PC-3 (cell line): ENCODE measurements at regions of chr3 and their contacts with region 1.

Region 1: GRCh38 chr3:10941972-10942371 is 50.6 kb upstream of the SLC6A1 start:
- DNase-seq: peak; percentile 68
- ATAC-seq: peak; percentile 30; the same call in 1 of the 2 replicates
- H3K4me3 ChIP-seq: no peak overlapping the region
- H3K27ac ChIP-seq: no peak overlapping the region
- H3K4me1 ChIP-seq: no peaks in the 10 kb centered on the region
- H3K27me3 ChIP-seq: 0 out of 2 replicates have a peak, but pooled peaks cover 3% of the 10 kb centered on the region
- CTCF ChIP-seq: peak; percentile 97

Region 2: DNA sequence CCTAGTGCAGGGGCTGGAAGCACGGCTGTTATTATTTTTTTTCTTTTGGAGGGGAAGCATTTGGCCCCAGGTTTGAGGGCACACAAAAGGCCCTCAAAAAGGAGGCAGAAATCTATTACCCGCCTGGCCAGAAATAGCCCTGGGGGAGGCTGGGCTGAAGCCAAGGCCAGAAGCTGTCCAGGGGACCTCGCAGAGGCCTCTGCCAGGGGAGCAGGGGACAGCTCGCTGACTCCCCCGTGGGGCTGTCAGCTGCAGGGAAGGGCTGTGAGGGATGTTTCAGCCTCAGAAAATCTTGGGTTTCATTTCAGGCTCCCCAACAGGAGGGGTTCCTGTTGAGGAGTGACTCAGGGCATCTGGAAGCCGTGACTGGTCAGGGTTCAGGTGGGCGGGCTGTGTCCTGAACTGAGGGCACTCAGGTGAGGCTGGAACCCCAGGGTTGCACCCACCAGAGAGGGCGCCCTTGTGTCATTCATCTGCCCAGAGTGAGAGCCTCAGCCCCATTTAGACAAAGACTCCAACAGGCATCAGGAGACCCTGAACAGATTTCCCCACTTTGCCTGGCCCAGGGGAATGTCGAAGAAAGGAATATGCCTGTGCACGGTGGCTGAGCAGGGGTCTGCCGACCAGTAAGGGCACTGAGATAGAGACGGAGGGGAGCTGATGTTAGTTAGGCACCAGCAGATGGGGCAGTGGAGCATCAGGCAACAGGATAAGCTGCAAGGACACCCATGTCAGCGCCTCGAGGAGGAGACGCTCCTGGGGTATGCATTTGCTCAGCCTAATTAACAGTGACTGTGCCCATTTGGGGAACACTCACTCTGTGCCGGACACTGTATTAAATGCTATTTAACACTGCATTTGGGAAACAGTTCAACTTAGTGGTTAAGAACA is 169.5 kb before region 1 on chr3:
- CTCF ChIA-PET with region 1: interaction called, 8 read pairs
- POLR2A ChIA-PET with region 1: no interaction called
- intact Hi-C with region 1: loop called (anchors 1 kb)
- DNase-seq: peak; percentile 67
- ATAC-seq: peak; percentile 85
- H3K4me3 ChIP-seq: no peak overlapping the region
- H3K27ac ChIP-seq: no peak overlapping the region
- H3K4me1 ChIP-seq: peaks cover 11% of the 10 kb centered on the region
- H3K27me3 ChIP-seq: no peaks in the 10 kb centered on the region
- CTCF ChIP-seq: peak; percentile 99